CD8-positive, alpha-beta memory T cell (primary cell): ENCODE measurements at regions of chr1 and their contacts with region 1.

Region 1: DNA sequence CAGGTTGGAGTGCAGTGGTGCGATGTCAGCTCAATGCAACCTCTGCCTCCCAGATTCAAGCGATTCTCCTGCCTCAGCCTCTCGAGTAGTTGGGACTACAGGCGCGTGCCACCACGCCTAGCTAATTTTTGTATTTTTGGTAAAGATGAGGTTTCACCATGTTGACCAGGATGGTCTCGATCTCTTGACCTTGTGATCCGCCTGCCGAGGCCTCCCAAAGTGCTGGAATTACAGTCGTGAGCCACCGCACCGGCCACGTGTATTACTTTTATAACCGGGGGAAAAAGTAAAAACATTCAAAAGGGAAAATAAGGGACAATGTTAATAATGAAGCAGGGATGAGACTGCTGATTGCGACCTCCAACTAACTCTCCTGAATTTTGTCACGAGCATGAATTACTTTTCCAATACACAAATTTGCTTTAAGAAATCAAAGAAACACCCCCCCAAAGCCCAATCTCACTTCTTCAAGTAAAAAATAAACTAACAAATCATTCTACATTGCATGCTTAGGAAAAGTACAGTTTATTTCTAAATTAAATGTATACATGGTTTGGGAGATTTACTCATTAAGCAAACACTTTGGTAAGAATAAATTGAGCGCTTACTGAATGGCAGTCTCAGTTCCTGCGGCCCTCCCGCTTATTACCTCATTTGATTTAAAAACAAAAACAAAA is 521 bp upstream of the ZBED6 start:
- DNase-seq: no peak
- H3K4me3 ChIP-seq: peak overlapping the region; percentile 85
- H3K4me3 Mint-ChIP-seq: peak overlapping the region; percentile 87 to 99 (median 93)
- H3K27ac ChIP-seq: peak overlapping the region; percentile 91
- H3K27ac Mint-ChIP-seq: peak overlapping the region; percentile 90 to 100 (median 97)
- H3K4me1 ChIP-seq: peaks cover 43% of the 10 kb centered on the region
- H3K4me1 Mint-ChIP-seq: peaks cover 44 to 48% (median 48%) of the 10 kb centered on the region in 3 donors
- H3K27me3 ChIP-seq: no peaks in the 10 kb centered on the region
- H3K27me3 Mint-ChIP-seq: no peaks in the 10 kb centered on the region

Region 2: GRCh38 chr1:203711251-203712007 is 83.5 kb before region 1 on chr1:
- CTCF ChIA-PET with region 1: no interaction called
- POLR2A ChIA-PET with region 1: interaction called, 13 read pairs
- DNase-seq: no peak
- H3K4me3 ChIP-seq: no peak overlapping the region
- H3K4me3 Mint-ChIP-seq: no peak overlapping the region
- H3K27ac ChIP-seq: no peak overlapping the region
- H3K27ac Mint-ChIP-seq: peak overlapping the region in 7 of 8 donors; percentile 3 to 64 (median 23)
- H3K4me1 ChIP-seq: no peaks in the 10 kb centered on the region
- H3K4me1 Mint-ChIP-seq: no peaks in the 10 kb centered on the region
- H3K27me3 ChIP-seq: no peaks in the 10 kb centered on the region
- H3K27me3 Mint-ChIP-seq: no peaks in the 10 kb centered on the region

Region 3: DNA sequence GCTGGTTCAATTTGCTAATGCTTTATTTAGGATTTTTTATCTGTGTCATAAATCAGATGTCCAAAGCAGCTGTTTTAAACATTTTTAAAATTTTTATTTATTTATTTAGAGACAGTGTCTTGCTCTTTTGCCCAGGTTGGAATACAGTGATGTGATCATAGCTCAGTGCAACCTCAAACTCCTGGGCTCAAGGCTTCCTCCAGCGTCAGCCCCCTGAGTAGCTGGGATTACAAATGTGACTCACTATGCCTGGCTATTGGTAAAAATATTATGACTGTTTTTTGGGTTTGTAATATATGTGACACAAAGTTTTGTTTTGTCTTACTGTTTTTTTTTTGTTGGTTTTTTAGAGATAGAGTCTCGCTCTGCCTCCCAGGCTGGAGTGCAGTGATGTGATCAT is 12.3 kb after region 1 on chr1:
- CTCF ChIA-PET with region 1: no interaction called
- POLR2A ChIA-PET with region 1: no interaction called
- DNase-seq: no peak
- H3K4me3 ChIP-seq: no peak overlapping the region
- H3K4me3 Mint-ChIP-seq: peak overlapping the region in 1 of 7 donors; percentile 2
- H3K27ac ChIP-seq: no peak overlapping the region
- H3K27ac Mint-ChIP-seq: peak overlapping the region in 2 of 8 donors; percentile 7 to 32
- H3K4me1 ChIP-seq: no peaks in the 10 kb centered on the region
- H3K4me1 Mint-ChIP-seq: peaks cover 43 to 69% (median 51%) of the 10 kb centered on the region in 3 donors
- H3K27me3 ChIP-seq: no peaks in the 10 kb centered on the region
- H3K27me3 Mint-ChIP-seq: no peaks in the 10 kb centered on the region